Calu3 (cell line): ENCODE measurements at regions of chr5 and their contacts with region 1.

Region 1: GRCh38 chr5:169701910-169702451 is 64.9 kb downstream of the DOCK2 start:
- DNase-seq: no peak
- H3K4me3 Mint-ChIP-seq: no peak overlapping the region
- H3K27ac Mint-ChIP-seq: no peak overlapping the region
- H3K4me1 Mint-ChIP-seq: peaks cover under 1% of the 10 kb centered on the region
- H3K27me3 Mint-ChIP-seq: peaks cover 47% of the 10 kb centered on the region
- CTCF ChIP-seq: no peak

Region 2: GRCh38 chr5:169826618-169827017 is 124.6 kb after region 1 on chr5:
- CTCF ChIA-PET with region 1: interaction called, 3 read pairs
- intact Hi-C with region 1: loop called (anchors 5 kb)
- DNase-seq: no peak
- H3K4me3 Mint-ChIP-seq: no peak overlapping the region
- H3K27ac Mint-ChIP-seq: no peak overlapping the region
- H3K4me1 Mint-ChIP-seq: no peaks in the 10 kb centered on the region
- H3K27me3 Mint-ChIP-seq: peaks cover 49% of the 10 kb centered on the region
- CTCF ChIP-seq: no peak

Region 3: DNA sequence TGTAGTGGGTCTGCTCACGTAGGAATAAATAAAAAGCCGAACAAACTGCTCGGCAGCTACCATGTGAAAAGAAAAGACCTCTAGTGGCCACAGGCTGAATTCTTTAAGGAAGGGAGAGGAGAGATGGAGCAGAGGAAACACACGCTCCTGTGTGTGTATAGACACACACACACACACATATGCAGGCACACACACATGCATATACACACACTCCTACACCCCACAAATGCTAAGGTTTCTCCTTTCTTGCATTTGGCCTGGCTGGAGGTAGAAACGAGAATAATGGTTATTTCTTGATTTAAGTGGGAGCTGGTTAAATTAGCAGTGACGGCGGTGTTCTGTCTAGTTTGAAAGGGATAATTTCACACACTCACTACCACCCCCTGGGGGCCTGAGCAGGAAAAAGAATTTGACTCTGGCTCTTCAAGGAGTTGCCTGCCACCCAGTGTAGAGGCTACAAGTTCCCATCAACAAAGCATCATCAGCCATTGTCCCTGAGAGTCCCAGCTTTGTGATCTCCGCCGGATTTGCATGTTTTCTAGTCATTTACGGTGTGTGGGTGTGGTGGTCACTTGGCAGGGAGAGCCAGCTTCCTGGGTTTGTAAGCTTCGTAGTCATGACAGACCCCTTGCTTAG is 278.6 kb after region 1 on chr5 and contains the start of gene INSYN2B:
- CTCF ChIA-PET with region 1: interaction called, 22 read pairs
- intact Hi-C with region 1: loop called (anchors 1 kb)
- DNase-seq: peak; percentile 71
- H3K4me3 Mint-ChIP-seq: no peak within 1 kb of the TSS
- H3K27ac Mint-ChIP-seq: no peak within 1 kb of the TSS
- H3K4me1 Mint-ChIP-seq: no peaks in the 10 kb centered on the region
- H3K27me3 Mint-ChIP-seq: peaks cover 90% of the 10 kb centered on the region
- CTCF ChIP-seq: peak; percentile 50
- total RNA-seq, gene INSYN2B: not detected in 2 replicates

Region 4: GRCh38 chr5:170070556-170071412 is 368.8 kb after region 1 on chr5:
- CTCF ChIA-PET with region 1: interaction called, 7 read pairs
- intact Hi-C with region 1: loop called (anchors 5 kb)
- DNase-seq: peak; percentile 53
- H3K4me3 Mint-ChIP-seq: no peak overlapping the region
- H3K27ac Mint-ChIP-seq: no peak overlapping the region
- H3K4me1 Mint-ChIP-seq: no peaks in the 10 kb centered on the region
- H3K27me3 Mint-ChIP-seq: peaks cover 86% of the 10 kb centered on the region
- CTCF ChIP-seq: peak; percentile 87

Region 5: DNA sequence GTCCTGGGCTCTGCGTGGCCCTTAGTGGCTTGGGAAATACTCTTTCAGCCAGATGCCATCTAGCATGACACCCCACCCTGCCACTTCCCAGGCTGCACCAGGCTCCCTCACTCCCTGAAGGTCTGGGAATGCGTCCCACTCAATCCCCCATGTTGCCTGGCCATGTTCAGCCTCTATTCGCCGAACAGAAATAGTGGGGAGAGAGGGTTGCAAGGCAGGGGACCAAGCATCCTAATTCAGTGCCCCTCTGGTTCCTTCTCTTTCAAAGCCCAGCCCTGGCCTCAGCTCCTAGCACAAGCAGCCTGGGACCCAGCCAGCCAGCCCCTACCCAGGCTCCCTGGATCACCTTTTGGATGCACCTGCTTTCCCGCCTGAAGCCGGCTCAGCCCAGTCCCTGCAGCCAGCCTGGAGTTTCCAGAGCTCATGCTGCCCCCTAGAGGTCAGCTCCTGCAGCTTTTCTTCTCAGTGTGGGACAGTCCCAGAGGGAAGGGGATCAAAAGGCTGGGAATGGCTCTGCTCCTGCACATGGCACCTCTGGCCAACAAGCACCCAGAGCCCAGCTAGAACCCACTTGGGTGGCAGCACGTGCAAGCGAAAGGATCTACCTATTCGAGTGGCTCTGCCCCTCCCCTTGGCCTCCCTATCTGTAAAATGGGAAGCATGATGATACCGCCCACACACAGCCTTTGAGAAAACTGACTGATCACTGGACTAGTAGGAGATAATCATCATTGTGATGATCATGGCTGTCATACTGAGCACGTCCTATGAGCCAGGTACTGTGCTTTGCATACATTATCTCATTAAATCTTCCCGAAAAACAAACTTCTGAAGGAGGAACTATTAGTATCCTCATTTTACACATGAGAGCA is 482.1 kb after region 1 on chr5:
- CTCF ChIA-PET with region 1: interaction called, 3 read pairs
- intact Hi-C with region 1: loop called (anchors 10 kb)
- DNase-seq: peak; percentile 90
- H3K4me3 Mint-ChIP-seq: no peak overlapping the region
- H3K27ac Mint-ChIP-seq: no peak overlapping the region
- H3K4me1 Mint-ChIP-seq: no peaks in the 10 kb centered on the region
- H3K27me3 Mint-ChIP-seq: peaks cover 48% of the 10 kb centered on the region
- CTCF ChIP-seq: peak; percentile 93

Region 6: GRCh38 chr5:170216266-170216864 is 514.4 kb after region 1 on chr5:
- CTCF ChIA-PET with region 1: interaction called, 6 read pairs
- intact Hi-C with region 1: loop called (anchors 5 kb)
- DNase-seq: peak; percentile 67
- H3K4me3 Mint-ChIP-seq: no peak overlapping the region
- H3K27ac Mint-ChIP-seq: no peak overlapping the region
- H3K4me1 Mint-ChIP-seq: no peaks in the 10 kb centered on the region
- H3K27me3 Mint-ChIP-seq: no peaks in the 10 kb centered on the region
- CTCF ChIP-seq: peak; percentile 77